ENCODE measurements at regions of chr11 and their contacts with region 1.

Region 1: GRCh38 chr11:69233744-69234136 is 60.2 kb upstream of the MYEOV start:
- DNase-seq: no peak
- H3K4me3 ChIP-seq: no peak overlapping the region
- H3K27ac ChIP-seq: no peak overlapping the region
- H3K4me1 ChIP-seq: no peaks in the 10 kb centered on the region
- H3K27me3 ChIP-seq: no peaks in the 10 kb centered on the region
- CTCF ChIP-seq: no peak

Region 2: GRCh38 chr11:69138265-69138664 is 95.5 kb before region 1 on chr11:
- CTCF ChIA-PET with region 1: no interaction called
- dilution Hi-C with region 1: loop called (anchors 5 kb)
- in situ Hi-C with region 1: no loop called
- intact Hi-C with region 1: no loop called
- DNase-seq: peak; percentile 96
- H3K4me3 ChIP-seq: no peak overlapping the region
- H3K27ac ChIP-seq: peak overlapping the region; percentile 61
- H3K4me1 ChIP-seq: peaks cover 20% of the 10 kb centered on the region
- H3K27me3 ChIP-seq: no peaks in the 10 kb centered on the region
- CTCF ChIP-seq: no peak

Region 3: DNA sequence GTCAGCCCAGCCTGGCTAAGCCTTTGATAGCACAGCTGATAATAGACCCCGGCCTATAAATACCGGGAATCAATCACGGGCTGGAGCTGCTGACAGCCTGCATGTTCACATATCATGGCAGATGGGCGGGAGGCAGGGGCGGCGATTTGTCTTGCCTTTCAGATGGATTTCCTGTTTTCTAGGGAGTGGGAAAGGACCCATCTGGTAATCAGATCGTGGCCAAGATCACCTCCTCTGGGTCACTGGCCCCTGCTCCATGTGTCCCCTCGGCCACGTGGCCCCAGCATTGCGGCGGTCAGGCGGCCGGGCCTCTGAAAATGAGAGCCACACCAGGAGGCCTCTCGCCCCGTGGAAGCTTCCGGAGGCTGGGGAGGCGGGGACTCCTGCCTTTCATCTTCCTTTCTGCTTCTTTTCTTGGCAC is 41.4 kb before region 1 on chr11:
- CTCF ChIA-PET with region 1: no interaction called
- dilution Hi-C with region 1: loop called (anchors 5 kb)
- in situ Hi-C with region 1: no loop called
- intact Hi-C with region 1: no loop called
- DNase-seq: no peak
- H3K4me3 ChIP-seq: no peak overlapping the region
- H3K27ac ChIP-seq: no peak overlapping the region
- H3K4me1 ChIP-seq: no peaks in the 10 kb centered on the region
- H3K27me3 ChIP-seq: no peaks in the 10 kb centered on the region
- CTCF ChIP-seq: no peak